Endothelial cell of umbilical vein (primary cell): ENCODE measurements at regions of chr10 and their contacts with region 1.

Region 1: DNA sequence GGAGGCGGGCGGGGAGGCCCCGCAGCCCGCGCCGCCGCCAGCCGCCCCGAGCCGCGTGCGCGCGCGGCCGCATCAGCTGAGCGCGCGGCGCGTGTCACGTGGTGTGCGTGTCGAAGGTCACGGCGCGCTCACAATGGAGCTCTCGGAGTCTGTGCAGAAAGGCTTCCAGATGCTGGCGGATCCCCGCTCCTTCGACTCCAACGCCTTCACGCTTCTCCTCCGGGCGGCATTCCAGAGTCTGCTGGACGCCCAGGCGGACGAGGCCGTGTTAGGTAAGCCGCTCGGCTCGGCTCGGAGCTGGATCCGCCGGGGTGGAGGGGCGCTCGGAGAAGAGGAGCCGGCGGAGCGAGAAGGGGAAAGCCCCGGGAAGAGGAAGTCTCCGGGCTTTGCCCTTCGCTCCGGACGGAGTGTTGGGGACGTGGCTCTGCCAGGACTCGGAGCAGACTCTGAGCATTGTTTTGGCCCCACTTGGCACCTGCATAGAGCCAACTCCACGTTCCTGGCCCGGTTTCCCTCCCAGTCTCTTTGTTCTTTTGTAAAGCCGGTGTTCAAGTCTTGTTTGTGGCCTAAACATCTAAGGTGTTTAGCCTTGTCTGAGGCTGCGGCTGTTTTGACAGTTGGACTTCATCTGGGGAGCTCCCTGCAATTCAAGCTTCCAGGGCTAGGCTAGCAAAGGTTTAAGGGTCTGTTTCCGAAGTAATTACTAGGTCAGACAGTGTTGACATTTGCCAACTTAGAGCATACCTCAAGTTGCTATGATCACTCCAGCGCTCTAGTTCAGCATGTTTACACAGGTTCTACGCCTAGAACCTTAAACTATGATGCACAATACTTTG is at the start of gene COMMD3:
- DNase-seq: peak; percentile 88
- H3K4me3 ChIP-seq: peak within 1 kb of the TSS; percentile 67 to 93 (median 83)
- H3K27ac ChIP-seq: peak within 1 kb of the TSS; percentile 69
- H3K4me1 ChIP-seq: peaks cover 17% of the 10 kb centered on the region
- H3K27me3 ChIP-seq: no peaks in the 10 kb centered on the region
- CTCF ChIP-seq: no peak
- POLR2A ChIP-seq: peak; percentile 89
- total RNA-seq, gene COMMD3: 48.9 and 49.8 TPM in 2 replicates

Region 2: GRCh38 chr10:22251751-22252223 is 64.7 kb before region 1 on chr10:
- CTCF ChIA-PET with region 1: interaction called, 5 read pairs
- POLR2A ChIA-PET with region 1: no interaction called
- dilution Hi-C with region 1: no loop called
- intact Hi-C with region 1: loop called (anchors 2 kb)
- DNase-seq: peak; percentile 67
- H3K4me3 ChIP-seq: peak overlapping the region; percentile 58 to 87 (median 58)
- H3K27ac ChIP-seq: peak overlapping the region; percentile 81
- H3K4me1 ChIP-seq: peaks cover 6% of the 10 kb centered on the region
- H3K27me3 ChIP-seq: peaks cover under 1 to 1% of the 10 kb centered on the region in 2 experiments
- CTCF ChIP-seq: no peak
- POLR2A ChIP-seq: no peak

Region 3: GRCh38 chr10:22340362-22341189 is 24.1 kb after region 1 on chr10:
- CTCF ChIA-PET with region 1: interaction called, 9 read pairs
- POLR2A ChIA-PET with region 1: interaction called, 4 read pairs
- dilution Hi-C with region 1: no loop called
- intact Hi-C with region 1: loop called (anchors 1 kb)
- DNase-seq: peak; percentile 53
- H3K4me3 ChIP-seq: peak overlapping the region; percentile 78 to 81 (median 80)
- H3K27ac ChIP-seq: peak overlapping the region; percentile 63
- H3K4me1 ChIP-seq: peaks cover 13% of the 10 kb centered on the region
- H3K27me3 ChIP-seq: peaks cover 72 to 90% of the 10 kb centered on the region in 2 experiments
- CTCF ChIP-seq: no peak
- POLR2A ChIP-seq: peak; percentile 31

Region 4: GRCh38 chr10:22379059-22379458 is 62.6 kb after region 1 on chr10:
- CTCF ChIA-PET with region 1: no interaction called
- POLR2A ChIA-PET with region 1: no interaction called
- dilution Hi-C with region 1: no loop called
- intact Hi-C with region 1: no loop called
- DNase-seq: no peak
- H3K4me3 ChIP-seq: no peak overlapping the region
- H3K27ac ChIP-seq: no peak overlapping the region
- H3K4me1 ChIP-seq: peaks cover 10% of the 10 kb centered on the region
- H3K27me3 ChIP-seq: no peaks in the 10 kb centered on the region
- CTCF ChIP-seq: no peak
- POLR2A ChIP-seq: no peak

Region 5: DNA sequence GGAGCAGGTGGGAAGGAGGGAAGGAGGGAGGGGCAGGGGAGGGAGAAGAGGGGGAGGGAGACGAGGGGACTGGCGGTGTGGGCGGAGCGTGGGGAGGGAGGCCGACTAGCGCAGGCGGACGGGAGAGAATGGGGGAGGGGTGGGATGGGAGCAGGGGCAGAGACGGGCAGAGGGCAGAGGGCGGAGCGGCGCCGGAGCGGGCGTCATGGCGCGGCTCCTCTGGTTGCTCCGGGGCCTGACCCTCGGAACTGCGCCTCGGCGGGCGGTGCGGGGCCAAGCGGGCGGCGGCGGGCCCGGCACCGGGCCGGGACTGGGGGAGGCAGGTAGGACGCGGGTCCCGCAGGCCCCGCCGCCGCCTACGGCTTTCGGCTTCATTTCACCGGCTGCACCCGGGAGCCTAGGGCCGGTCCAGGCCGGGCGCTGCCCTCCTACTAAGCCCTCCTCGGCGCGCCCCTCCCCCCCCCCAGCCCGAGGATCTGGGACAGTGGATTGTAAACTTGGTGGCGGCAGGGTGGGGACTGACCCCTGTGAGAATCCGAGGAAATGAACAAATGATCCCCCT is 779.0 kb after region 1 on chr10 and contains the start of gene MSRB2:
- CTCF ChIA-PET with region 1: no interaction called
- POLR2A ChIA-PET with region 1: no interaction called
- dilution Hi-C with region 1: no loop called
- intact Hi-C with region 1: loop called (anchors 5 kb)
- DNase-seq: peak; percentile 90
- H3K4me3 ChIP-seq: peak within 1 kb of the TSS; percentile 52 to 91 (median 84)
- H3K27ac ChIP-seq: peak within 1 kb of the TSS; percentile 25
- H3K4me1 ChIP-seq: peaks cover 18% of the 10 kb centered on the region
- H3K27me3 ChIP-seq: peaks cover 1 to 10% of the 10 kb centered on the region in 2 experiments
- CTCF ChIP-seq: no peak
- POLR2A ChIP-seq: peak; percentile 89
- total RNA-seq, gene MSRB2: 16.2 and 19.4 TPM in 2 replicates